Activated naive CD4-positive, alpha-beta T cell treated with anti-CD3 and anti-CD28 coated beads for 36 hours (primary cell): ENCODE measurements at regions of chr3 and their contacts with region 1.

Region 1: GRCh38 chr3:170144437-170144843 is 37.1 kb downstream of the PHC3 start:
- DNase-seq: no peak
- H3K4me3 Mint-ChIP-seq: no peak overlapping the region
- H3K27ac Mint-ChIP-seq: peak overlapping the region; percentile 71
- H3K4me1 Mint-ChIP-seq: peaks cover 34% of the 10 kb centered on the region
- H3K27me3 Mint-ChIP-seq: no peaks in the 10 kb centered on the region

Region 2: GRCh38 chr3:170128977-170129431 is 15.4 kb before region 1 on chr3:
- CTCF ChIA-PET with region 1: interaction called, 4 read pairs
- intact Hi-C with region 1: loop called (anchors 2 kb)
- DNase-seq: peak; percentile 48
- H3K4me3 Mint-ChIP-seq: peak overlapping the region; percentile 20
- H3K27ac Mint-ChIP-seq: peak overlapping the region; percentile 76
- H3K4me1 Mint-ChIP-seq: peaks cover 40% of the 10 kb centered on the region
- H3K27me3 Mint-ChIP-seq: no peaks in the 10 kb centered on the region